Activated CD8-positive, alpha-beta memory T cell treated with anti-CD3 and anti-CD28 coated beads, Interleukin-2, amount 10 ng/mL, durations not matched to agents 7 days and 5 days (primary cell): ENCODE measurements at regions of chr22 and their contacts with region 1.

Region 1: DNA sequence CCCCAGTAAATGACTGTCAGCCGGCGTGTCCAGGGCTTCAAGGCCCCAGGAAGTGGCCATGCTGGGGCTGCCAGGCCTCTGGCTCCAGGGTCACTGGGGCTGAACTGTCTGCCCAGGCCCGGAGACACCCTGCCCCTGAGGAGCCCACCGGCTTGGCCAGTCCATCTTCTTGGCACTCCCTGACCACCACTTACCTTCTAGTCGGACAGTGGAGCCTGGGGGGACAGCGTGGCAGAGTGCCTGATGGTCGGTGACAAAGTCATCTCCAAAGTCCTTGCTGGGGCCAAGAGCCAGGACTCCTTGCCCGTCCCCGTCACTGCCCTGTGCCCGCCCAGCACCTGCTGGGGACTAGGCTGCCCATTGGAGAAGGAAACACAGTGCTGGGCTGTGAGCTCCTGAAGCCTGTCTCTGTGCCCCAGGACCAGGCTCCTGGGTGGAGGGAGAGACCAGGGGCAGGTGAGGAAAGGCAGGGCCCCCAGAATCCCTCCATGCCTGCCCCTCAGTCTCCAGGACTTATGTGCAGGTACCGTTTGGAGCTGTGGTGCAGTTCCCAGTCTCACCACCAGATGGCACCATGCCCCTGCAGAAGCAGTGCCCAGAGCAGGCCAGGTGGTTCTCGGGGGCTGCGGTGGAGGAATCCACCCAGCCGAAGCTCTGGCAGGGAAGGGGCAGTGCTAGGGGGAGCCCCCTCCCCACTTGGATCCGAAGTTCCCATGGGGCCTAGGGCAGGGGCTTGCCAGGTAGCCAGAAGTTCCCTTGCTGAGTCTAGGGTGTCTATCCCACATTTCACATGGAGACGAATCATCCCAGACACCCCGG is 6.0 kb upstream of the CCDC188 start:
- DNase-seq: peak; percentile 91
- ATAC-seq: peak; percentile 85
- H3K4me3 Mint-ChIP-seq: no peak overlapping the region
- H3K27ac Mint-ChIP-seq: no peak overlapping the region
- H3K4me1 Mint-ChIP-seq: no peaks in the 10 kb centered on the region
- H3K27me3 Mint-ChIP-seq: no peaks in the 10 kb centered on the region

Region 2: DNA sequence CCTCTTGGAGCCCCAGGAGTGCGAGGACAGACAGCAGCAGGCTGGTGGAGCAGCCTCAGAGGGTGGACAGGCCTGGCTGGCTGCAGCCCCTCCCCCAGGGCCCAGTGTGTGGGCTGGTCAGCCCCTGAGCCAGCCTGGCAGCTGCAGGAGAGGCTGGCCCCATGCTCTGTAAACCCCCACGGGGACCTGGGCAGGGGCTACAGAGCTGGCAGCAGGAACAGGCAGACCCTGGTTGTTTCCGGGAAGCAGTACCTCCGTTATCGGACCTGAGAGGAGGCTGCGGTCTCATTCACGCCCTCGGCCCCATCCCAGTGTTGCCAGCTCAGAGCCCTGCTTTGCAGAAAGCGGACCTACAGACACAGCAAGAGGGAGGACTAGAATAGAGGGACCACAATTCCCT is 253.8 kb before region 1 on chr22:
- CTCF ChIA-PET with region 1: no interaction called
- DNase-seq: no peak
- ATAC-seq: no peak
- H3K4me3 Mint-ChIP-seq: no peak overlapping the region
- H3K27ac Mint-ChIP-seq: no peak overlapping the region
- H3K4me1 Mint-ChIP-seq: no peaks in the 10 kb centered on the region
- H3K27me3 Mint-ChIP-seq: no peaks in the 10 kb centered on the region

Region 3: DNA sequence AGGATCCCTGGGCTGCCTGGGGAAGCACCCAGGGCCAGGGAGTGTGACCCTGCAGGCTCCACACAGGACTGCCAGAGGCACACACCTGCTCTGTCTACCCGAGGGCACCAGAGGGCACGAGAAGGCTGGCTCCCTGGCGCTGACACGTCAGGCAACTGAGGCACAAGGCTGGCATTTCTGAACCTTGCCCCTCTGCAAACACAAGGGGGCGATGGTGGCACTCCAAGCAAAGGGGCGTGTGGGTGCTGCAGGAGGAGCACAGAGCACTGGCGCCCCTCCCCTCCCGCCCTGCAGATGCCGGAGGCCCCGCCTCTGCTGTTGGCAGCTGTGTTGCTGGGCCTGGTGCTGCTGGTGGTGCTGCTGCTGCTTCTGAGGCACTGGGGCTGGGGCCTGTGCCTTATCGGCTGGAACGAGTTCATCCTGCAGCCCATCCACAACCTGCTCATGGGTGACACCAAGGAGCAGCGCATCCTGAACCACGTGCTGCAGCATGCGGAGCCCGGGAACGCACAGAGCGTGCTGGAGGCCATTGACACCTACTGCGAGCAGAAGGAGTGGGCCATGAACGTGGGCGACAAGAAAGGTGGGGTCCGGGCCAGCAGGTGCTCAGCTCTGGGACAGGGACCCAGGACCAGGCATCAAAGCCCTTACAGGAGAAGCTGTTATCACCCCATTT is 194.4 kb before region 1 on chr22:
- CTCF ChIA-PET with region 1: no interaction called
- DNase-seq: peak; percentile 83
- ATAC-seq: peak; percentile 68
- H3K4me3 Mint-ChIP-seq: no peak overlapping the region
- H3K27ac Mint-ChIP-seq: no peak overlapping the region
- H3K4me1 Mint-ChIP-seq: peaks cover 24% of the 10 kb centered on the region
- H3K27me3 Mint-ChIP-seq: no peaks in the 10 kb centered on the region

Region 4: DNA sequence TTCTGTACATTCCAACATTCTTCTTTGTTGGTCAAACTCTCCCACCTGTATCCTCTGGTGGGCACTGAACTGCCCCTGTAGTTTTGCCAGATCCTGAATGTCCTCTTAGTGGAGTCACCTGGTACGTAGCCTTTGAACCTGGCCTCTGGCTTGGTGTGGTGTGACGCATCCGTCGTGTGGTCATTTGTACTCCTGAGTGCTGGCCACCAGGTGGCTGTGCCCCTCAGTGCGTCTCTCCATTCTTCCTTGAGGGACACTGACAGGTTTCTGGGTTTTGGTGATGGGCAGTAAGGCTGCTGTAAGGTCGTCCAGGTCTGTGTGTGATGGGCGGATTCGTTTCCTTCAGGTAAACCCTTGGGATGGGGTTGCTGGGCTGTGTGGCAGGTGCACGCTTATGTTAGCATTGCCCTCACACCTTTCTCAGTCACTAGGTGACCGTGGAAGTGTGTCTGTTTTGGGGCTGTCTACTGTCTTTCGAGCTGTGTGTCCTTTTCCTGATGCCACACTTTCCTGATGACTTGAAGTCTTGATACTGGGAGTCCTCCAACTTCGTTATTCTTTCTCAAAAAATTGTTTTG is 54.5 kb before region 1 on chr22:
- CTCF ChIA-PET with region 1: no interaction called
- DNase-seq: no peak
- ATAC-seq: no peak
- H3K4me3 Mint-ChIP-seq: no peak overlapping the region
- H3K27ac Mint-ChIP-seq: peak overlapping the region; percentile 85
- H3K4me1 Mint-ChIP-seq: peaks cover 47% of the 10 kb centered on the region
- H3K27me3 Mint-ChIP-seq: no peaks in the 10 kb centered on the region

Region 5: DNA sequence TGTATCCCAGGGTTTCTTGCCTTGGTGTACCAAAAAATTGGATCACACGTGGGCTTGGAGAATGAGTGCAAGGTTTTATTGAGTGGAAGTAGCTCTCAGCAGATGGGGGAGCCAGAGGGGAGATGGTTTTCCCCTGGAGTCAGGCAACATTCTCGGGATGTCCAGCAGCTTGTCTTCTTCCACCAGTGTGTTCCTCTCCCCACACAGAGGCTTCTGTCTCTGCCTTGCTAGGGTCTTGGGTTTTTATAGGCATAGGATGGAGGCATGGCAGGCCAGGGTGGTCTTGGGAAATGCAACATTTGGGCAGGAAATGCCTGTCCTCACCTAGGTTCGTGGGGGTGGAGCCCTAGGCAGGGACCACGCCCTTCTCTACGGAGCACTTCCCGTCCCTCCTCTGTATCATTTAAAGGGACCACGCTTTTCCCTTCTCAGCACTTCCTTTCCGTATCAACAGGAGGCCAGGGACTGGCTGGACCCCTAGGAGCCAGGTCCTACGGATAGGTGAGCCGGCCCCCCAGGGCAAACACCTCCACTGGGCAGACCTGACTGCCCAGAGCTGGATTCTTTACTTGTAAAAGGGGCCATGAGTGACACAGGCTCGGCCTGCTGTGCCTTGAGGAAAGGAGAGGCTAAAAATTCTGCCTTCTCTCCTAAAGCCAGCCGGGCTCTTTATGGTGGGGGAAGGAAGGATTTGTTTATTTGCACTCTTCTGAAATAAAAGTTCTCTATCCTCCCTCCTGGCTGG is 49.3 kb after region 1 on chr22:
- CTCF ChIA-PET with region 1: interaction called, 11 read pairs
- DNase-seq: peak; percentile 84
- ATAC-seq: peak; percentile 91
- H3K4me3 Mint-ChIP-seq: peak overlapping the region; percentile 86
- H3K27ac Mint-ChIP-seq: peak overlapping the region; percentile 87
- H3K4me1 Mint-ChIP-seq: peaks cover 16% of the 10 kb centered on the region
- H3K27me3 Mint-ChIP-seq: no peaks in the 10 kb centered on the region

Region 6: DNA sequence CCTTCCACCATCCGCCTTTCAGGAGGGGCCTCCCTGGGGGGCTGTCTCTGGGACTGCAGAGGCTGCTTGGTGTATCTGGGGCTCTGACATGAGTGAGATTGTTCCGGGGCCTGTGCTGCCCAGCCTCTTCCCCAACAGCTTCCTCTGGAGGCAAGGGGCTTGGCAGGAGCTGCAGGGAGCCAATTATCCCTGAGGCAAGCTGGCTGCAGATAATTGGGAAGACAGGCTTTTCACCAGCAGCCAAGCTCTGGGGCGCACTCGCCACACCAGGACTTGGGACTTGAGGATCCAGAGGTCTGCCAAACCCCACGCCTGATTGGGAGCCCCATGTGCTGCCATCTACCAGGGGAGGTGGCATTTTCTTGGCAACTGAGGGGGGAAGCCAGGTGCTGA is 126.8 kb after region 1 on chr22:
- CTCF ChIA-PET with region 1: interaction called, 19 read pairs
- DNase-seq: no peak
- ATAC-seq: no peak
- H3K4me3 Mint-ChIP-seq: no peak overlapping the region
- H3K27ac Mint-ChIP-seq: no peak overlapping the region
- H3K4me1 Mint-ChIP-seq: peaks cover 2% of the 10 kb centered on the region
- H3K27me3 Mint-ChIP-seq: no peaks in the 10 kb centered on the region